MCF 10A (cell line): ENCODE measurements at regions of chr16 and their contacts with region 1.

Region 1: GRCh38 chr16:75622761-75623605 is at the start of gene ADAT1:
- DNase-seq: peak; percentile 98
- H3K4me3 Mint-ChIP-seq: peak within 1 kb of the TSS; percentile 84
- H3K27ac Mint-ChIP-seq: peak within 1 kb of the TSS; percentile 72
- H3K4me1 Mint-ChIP-seq: peaks cover 25% of the 10 kb centered on the region
- H3K27me3 Mint-ChIP-seq: no peaks in the 10 kb centered on the region
- CTCF ChIP-seq: no peak
- total RNA-seq, gene ADAT1: 48.7 and 60.2 TPM in 2 replicates

Region 2: DNA sequence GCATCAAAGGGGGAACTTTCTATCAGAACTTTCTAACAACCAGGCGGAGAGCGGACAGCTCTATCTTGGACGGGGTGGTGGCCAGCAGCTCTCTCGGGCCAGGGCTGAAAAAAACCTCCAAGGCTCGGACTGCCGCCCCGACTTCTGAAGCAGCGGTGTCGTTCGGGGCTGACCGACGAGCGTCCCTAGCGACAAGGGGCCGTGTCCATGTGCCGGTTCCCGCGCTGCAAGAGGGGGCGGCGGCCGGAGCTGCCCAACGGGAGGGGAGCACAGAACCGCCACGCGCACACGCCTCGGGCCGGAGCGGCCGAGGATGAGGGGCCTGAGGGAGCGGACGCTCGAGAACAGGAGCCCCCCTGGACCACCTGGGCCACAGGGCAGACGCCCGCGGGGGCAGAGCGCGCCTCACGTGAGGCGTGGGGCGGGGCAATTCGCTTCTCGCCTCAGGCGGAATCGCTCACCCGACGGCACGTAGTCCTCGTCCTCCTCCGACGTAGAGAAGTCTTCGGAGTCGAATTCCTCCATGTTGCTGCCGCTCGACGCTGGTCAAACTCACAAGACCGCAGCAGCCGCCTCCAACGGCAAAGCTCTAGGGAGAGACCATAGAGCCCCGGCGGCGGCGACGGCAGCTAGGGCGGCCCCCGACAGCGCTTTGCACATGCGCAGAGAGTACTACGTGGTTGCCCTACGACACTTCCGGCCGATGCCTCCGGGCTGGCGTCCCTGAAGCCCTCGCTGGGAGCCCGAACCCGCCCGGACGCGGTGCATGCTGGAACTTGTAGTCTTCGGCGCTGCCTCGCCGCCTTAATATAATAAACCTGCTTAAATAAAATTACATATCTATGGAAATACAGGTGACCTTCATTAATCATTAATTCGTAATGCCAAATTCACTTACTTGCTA is 189.9 kb before region 1 on chr16 and contains the start of gene CFDP1:
- CTCF ChIA-PET with region 1: no interaction called
- POLR2A ChIA-PET with region 1: interaction called, 19 read pairs
- intact Hi-C with region 1: no loop called
- DNase-seq: peak; percentile 95
- H3K4me3 Mint-ChIP-seq: peak within 1 kb of the TSS; percentile 77
- H3K27ac Mint-ChIP-seq: peak within 1 kb of the TSS; percentile 86
- H3K4me1 Mint-ChIP-seq: peaks cover 13% of the 10 kb centered on the region
- H3K27me3 Mint-ChIP-seq: no peaks in the 10 kb centered on the region
- CTCF ChIP-seq: no peak
- total RNA-seq, gene CFDP1: 41.3 and 44.7 TPM in 2 replicates

Region 3: GRCh38 chr16:75486676-75487313 is 136.2 kb before region 1 on chr16:
- CTCF ChIA-PET with region 1: no interaction called
- POLR2A ChIA-PET with region 1: interaction called, 15 read pairs
- intact Hi-C with region 1: no loop called
- DNase-seq: no peak
- H3K4me3 Mint-ChIP-seq: no peak overlapping the region
- H3K27ac Mint-ChIP-seq: peak overlapping the region; percentile 70
- H3K4me1 Mint-ChIP-seq: peaks cover 36% of the 10 kb centered on the region
- H3K27me3 Mint-ChIP-seq: no peaks in the 10 kb centered on the region
- CTCF ChIP-seq: no peak

Region 4: GRCh38 chr16:75566040-75566810 is 56.8 kb before region 1 on chr16 and contains the start of gene GABARAPL2:
- CTCF ChIA-PET with region 1: interaction called, 3 read pairs
- POLR2A ChIA-PET with region 1: interaction called, 14 read pairs
- intact Hi-C with region 1: loop called (anchors 5 kb)
- DNase-seq: peak; percentile 77
- H3K4me3 Mint-ChIP-seq: peak within 1 kb of the TSS; percentile 83
- H3K27ac Mint-ChIP-seq: peak within 1 kb of the TSS; percentile 80
- H3K4me1 Mint-ChIP-seq: peaks cover 7% of the 10 kb centered on the region
- H3K27me3 Mint-ChIP-seq: peaks cover 13% of the 10 kb centered on the region
- CTCF ChIP-seq: no peak
- total RNA-seq, gene GABARAPL2: 61.5 and 70.5 TPM in 2 replicates